ENCODE measurements at regions of chr7 and their contacts with region 1.

Region 1: DNA sequence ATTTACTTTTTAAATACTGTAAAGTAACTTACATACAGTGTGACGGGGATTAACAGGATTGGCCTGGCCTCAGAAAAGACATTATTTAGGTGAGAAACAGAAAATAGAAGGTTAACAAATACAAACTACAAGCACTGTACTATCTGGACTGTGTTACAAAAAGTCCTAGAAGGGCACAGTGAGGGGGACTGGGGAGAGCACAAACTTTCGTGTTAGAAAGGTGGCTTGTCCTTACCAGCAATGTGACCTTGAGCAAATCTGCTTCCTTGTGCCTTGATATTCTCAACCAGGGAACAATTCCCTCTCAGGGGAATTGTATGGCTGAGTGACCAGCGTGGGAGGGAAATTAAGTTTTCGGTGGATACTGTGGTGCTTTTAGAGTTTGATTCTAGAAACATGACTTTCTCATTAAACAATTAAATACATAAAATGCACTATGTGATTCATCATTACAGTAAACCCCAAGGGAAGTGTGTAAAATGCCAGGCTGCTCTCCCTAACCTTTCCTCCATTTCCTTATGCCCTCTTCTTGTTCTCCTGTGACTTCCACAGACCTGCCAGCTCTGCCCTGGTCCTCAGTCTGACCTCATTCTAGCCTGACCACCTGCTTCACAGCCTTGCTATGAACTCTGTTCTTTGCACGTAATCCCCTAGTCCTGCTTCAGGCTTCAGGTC is 57.7 kb downstream of the OSBPL3 start:
- H3K4me3 Mint-ChIP-seq: no peak overlapping the region
- H3K27ac Mint-ChIP-seq: peak overlapping the region; percentile 75
- H3K4me1 Mint-ChIP-seq: peaks cover 45% of the 10 kb centered on the region
- H3K27me3 Mint-ChIP-seq: no peaks in the 10 kb centered on the region

Region 2: GRCh38 chr7:24963218-24963617 is 41.0 kb after region 1 on chr7:
- intact Hi-C with region 1: loop called (anchors 5 kb)
- H3K4me3 Mint-ChIP-seq: peak overlapping the region; percentile 42
- H3K27ac Mint-ChIP-seq: peak overlapping the region; percentile 95
- H3K4me1 Mint-ChIP-seq: peaks cover 80% of the 10 kb centered on the region
- H3K27me3 Mint-ChIP-seq: no peaks in the 10 kb centered on the region

Region 3: GRCh38 chr7:25520017-25520416 is 597.8 kb after region 1 on chr7:
- intact Hi-C with region 1: no loop called
- H3K4me3 Mint-ChIP-seq: no peak overlapping the region
- H3K27ac Mint-ChIP-seq: no peak overlapping the region
- H3K4me1 Mint-ChIP-seq: no peaks in the 10 kb centered on the region
- H3K27me3 Mint-ChIP-seq: no peaks in the 10 kb centered on the region